ENCODE measurements at regions of chr17 and their contacts with region 1.

Region 1: GRCh38 chr17:15999439-16000350 is at the starts of genes TTC19 and ZSWIM7:
- DNase-seq: peak; percentile 81
- ATAC-seq: peak; percentile 98
- H3K4me3 ChIP-seq: peak within 1 kb of the TSS; percentile 77 to 81
- H3K27ac ChIP-seq: peak within 1 kb of the TSS; percentile 89
- H3K4me1 ChIP-seq: peaks cover 5% of the 10 kb centered on the region; the same call in 1 of the 2 replicates
- H3K27me3 ChIP-seq: no peaks in the 10 kb centered on the region
- CTCF ChIP-seq: no peak
- total RNA-seq, gene TTC19: 28.4 TPM
- total RNA-seq, gene ZSWIM7: 17.5 TPM

Region 2: GRCh38 chr17:15882058-15882720 is 117.5 kb before region 1 on chr17:
- CTCF ChIA-PET with region 1: no interaction called
- POLR2A ChIA-PET with region 1: no interaction called
- in situ Hi-C with region 1: no loop called
- intact Hi-C with region 1: no loop called
- DNase-seq: no peak
- ATAC-seq: no peak
- H3K4me3 ChIP-seq: no peak overlapping the region
- H3K27ac ChIP-seq: no peak overlapping the region
- H3K4me1 ChIP-seq: no peaks in the 10 kb centered on the region
- H3K27me3 ChIP-seq: no peaks in the 10 kb centered on the region
- CTCF ChIP-seq: no peak; the same call in 1 of the 2 replicates

Region 3: DNA sequence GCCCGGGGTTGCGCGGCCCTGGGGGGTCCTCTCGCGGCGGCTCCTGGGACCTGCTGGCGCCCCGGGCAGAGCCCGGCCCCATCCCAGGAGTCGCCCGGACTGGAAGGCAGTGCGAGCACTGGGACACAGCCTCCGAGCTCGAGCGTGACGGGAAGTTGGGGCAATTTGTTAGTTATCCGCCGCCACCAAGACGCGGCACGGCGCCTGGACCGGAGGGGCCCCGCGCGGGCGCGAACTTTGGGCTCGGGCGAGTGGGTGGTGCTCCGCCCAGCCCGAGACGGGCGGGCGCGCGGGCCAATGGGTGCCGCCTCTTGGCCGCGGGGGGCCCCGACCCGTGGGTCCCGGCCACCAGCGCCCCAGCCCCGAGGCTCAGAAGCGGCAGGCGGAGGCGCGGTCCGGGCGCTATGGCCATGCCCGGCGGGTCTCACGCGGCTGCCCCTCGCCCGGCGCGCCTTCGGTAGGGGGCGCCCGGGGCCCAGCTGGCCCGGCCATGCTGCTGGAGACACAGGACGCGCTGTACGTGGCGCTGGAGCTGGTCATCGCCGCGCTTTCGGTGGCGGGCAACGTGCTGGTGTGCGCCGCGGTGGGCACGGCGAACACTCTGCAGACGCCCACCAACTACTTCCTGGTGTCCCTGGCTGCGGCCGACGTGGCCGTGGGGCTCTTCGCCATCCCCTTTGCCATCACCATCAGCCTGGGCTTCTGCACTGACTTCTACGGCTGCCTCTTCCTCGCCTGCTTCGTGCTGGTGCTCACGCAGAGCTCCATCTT is 54.8 kb before region 1 on chr17 and contains the start of gene ADORA2B:
- CTCF ChIA-PET with region 1: interaction called, 8 read pairs
- POLR2A ChIA-PET with region 1: no interaction called
- in situ Hi-C with region 1: no loop called
- intact Hi-C with region 1: loop called (anchors 2 kb)
- DNase-seq: no peak
- ATAC-seq: peak; percentile 87
- H3K4me3 ChIP-seq: peak within 1 kb of the TSS; percentile 67 to 96
- H3K27ac ChIP-seq: peak within 1 kb of the TSS; percentile 96
- H3K4me1 ChIP-seq: peaks cover 16% of the 10 kb centered on the region
- H3K27me3 ChIP-seq: no peaks in the 10 kb centered on the region
- CTCF ChIP-seq: peak; percentile 87
- total RNA-seq, gene ADORA2B: 42.7 TPM